ENCODE measurements at regions of chr19 and their contacts with region 1.

Region 1: DNA sequence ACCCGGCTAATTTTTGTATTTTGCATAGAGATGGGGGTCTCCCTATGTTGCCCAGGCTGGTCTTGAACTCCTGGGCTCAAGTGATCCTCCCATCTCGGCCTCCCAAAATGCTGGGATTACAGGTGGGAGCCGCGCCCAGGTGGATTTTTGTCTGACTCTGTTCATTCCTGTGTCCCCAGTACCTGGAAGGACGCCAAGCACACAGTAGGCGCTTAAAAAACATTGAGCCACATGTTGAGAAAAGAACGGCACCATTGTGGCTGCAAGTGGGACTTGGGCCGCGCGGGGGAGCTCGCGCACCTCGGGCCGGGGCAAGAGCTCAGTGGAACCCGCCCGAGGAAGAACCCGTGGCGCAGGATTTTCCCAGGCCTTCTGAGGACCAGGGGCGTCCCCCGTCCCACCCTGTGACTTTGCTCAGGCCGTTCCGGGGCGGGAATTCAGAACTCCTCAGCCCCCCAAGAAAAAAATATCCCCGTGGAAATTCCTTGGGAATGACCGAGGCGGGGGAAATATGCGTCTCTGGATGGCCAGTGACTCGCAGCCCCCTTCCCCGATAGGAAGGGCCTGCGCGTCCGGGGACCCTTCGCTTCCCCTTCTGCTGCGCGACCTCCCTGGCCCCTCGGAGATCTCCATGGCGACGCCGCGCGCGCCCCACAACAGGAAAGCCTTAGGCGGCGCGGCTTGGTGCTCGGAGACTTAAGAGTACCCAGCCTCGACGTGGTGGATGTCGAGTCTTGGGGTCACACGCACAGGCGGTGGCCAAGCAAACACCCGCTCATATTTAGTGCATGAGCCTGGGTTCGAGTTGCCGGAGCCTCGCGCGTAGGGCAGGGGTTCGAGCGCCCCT is 1.4 kb upstream of the ICAM1 start:
- DNase-seq: peak; percentile 81 to 90 (median 83)
- H3K4me3 ChIP-seq: peak overlapping the region; percentile 76
- H3K4me3 Mint-ChIP-seq: peak overlapping the region; percentile 83 to 94 (median 87)
- H3K27ac ChIP-seq: peak overlapping the region; percentile 87
- H3K27ac Mint-ChIP-seq: peak overlapping the region; percentile 90 to 99 (median 95)
- H3K4me1 ChIP-seq: peaks cover 21% of the 10 kb centered on the region
- H3K4me1 Mint-ChIP-seq: peaks cover 26 to 43% (median 28%) of the 10 kb centered on the region in 3 donors
- H3K27me3 ChIP-seq: no peaks in the 10 kb centered on the region
- H3K27me3 Mint-ChIP-seq: peaks cover 0 to 1% of the 10 kb centered on the region in 2 donors

Region 2: GRCh38 chr19:10259162-10259905 is 10.2 kb before region 1 on chr19:
- CTCF ChIA-PET with region 1: interaction called, 48 read pairs
- POLR2A ChIA-PET with region 1: no interaction called
- DNase-seq: peak; percentile 77 to 91 (median 79)
- H3K4me3 ChIP-seq: no peak overlapping the region
- H3K4me3 Mint-ChIP-seq: peak overlapping the region in 1 of 7 donors; percentile 81
- H3K27ac ChIP-seq: no peak overlapping the region
- H3K27ac Mint-ChIP-seq: peak overlapping the region in 3 of 8 donors; percentile 12 to 95 (median 38)
- H3K4me1 ChIP-seq: no peaks in the 10 kb centered on the region
- H3K4me1 Mint-ChIP-seq: peaks cover 0 to 23% (median 0%) of the 10 kb centered on the region in 3 donors
- H3K27me3 ChIP-seq: no peaks in the 10 kb centered on the region
- H3K27me3 Mint-ChIP-seq: no peaks in the 10 kb centered on the region

Region 3: GRCh38 chr19:10279737-10280442 is 10.3 kb after region 1 on chr19:
- CTCF ChIA-PET with region 1: interaction called, 27 read pairs
- POLR2A ChIA-PET with region 1: interaction called, 13 read pairs
- DNase-seq: no peak
- H3K4me3 ChIP-seq: no peak overlapping the region
- H3K4me3 Mint-ChIP-seq: peak overlapping the region in 6 of 7 donors; percentile 9 to 72 (median 58)
- H3K27ac ChIP-seq: no peak overlapping the region
- H3K27ac Mint-ChIP-seq: peak overlapping the region; percentile 24 to 95 (median 92)
- H3K4me1 ChIP-seq: no peaks in the 10 kb centered on the region
- H3K4me1 Mint-ChIP-seq: peaks cover 17 to 30% (median 24%) of the 10 kb centered on the region in 3 donors
- H3K27me3 ChIP-seq: no peaks in the 10 kb centered on the region
- H3K27me3 Mint-ChIP-seq: no peaks in the 10 kb centered on the region

Region 4: GRCh38 chr19:10292206-10292788 is 22.7 kb after region 1 on chr19:
- CTCF ChIA-PET with region 1: interaction called, 71 read pairs
- POLR2A ChIA-PET with region 1: interaction called, 47 read pairs
- DNase-seq: peak; percentile 52 to 78 (median 61)
- H3K4me3 ChIP-seq: peak overlapping the region; percentile 62
- H3K4me3 Mint-ChIP-seq: peak overlapping the region; percentile 76 to 93 (median 83)
- H3K27ac ChIP-seq: peak overlapping the region; percentile 69
- H3K27ac Mint-ChIP-seq: peak overlapping the region in 6 of 8 donors; percentile 11 to 88 (median 52)
- H3K4me1 ChIP-seq: peaks cover 76% of the 10 kb centered on the region
- H3K4me1 Mint-ChIP-seq: peaks cover 56 to 73% (median 59%) of the 10 kb centered on the region in 3 donors
- H3K27me3 ChIP-seq: peaks cover 61% of the 10 kb centered on the region
- H3K27me3 Mint-ChIP-seq: peaks cover 60 to 61% of the 10 kb centered on the region in 2 donors

Region 5: GRCh38 chr19:10380313-10381102 is 111.0 kb after region 1 on chr19 and contains the start of gene TYK2:
- CTCF ChIA-PET with region 1: interaction called, 355 read pairs
- POLR2A ChIA-PET with region 1: interaction called, 10 read pairs
- DNase-seq: peak; percentile 92 to 97 (median 97)
- H3K4me3 ChIP-seq: peak within 1 kb of the TSS; percentile 91
- H3K4me3 Mint-ChIP-seq: peak within 1 kb of the TSS; percentile 90 to 97 (median 93)
- H3K27ac ChIP-seq: peak within 1 kb of the TSS; percentile 90
- H3K27ac Mint-ChIP-seq: peak within 1 kb of the TSS; percentile 86 to 99 (median 97)
- H3K4me1 ChIP-seq: peaks cover 11% of the 10 kb centered on the region
- H3K4me1 Mint-ChIP-seq: peaks cover 18 to 28% (median 27%) of the 10 kb centered on the region in 3 donors
- H3K27me3 ChIP-seq: no peaks in the 10 kb centered on the region
- H3K27me3 Mint-ChIP-seq: no peaks in the 10 kb centered on the region
- total RNA-seq, gene TYK2: 210 to 212 TPM

Measured in CD8-positive, alpha-beta memory T cell (primary cell).